MCF 10A (cell line): ENCODE measurements at regions of chr13 and their contacts with region 1.

Region 1: DNA sequence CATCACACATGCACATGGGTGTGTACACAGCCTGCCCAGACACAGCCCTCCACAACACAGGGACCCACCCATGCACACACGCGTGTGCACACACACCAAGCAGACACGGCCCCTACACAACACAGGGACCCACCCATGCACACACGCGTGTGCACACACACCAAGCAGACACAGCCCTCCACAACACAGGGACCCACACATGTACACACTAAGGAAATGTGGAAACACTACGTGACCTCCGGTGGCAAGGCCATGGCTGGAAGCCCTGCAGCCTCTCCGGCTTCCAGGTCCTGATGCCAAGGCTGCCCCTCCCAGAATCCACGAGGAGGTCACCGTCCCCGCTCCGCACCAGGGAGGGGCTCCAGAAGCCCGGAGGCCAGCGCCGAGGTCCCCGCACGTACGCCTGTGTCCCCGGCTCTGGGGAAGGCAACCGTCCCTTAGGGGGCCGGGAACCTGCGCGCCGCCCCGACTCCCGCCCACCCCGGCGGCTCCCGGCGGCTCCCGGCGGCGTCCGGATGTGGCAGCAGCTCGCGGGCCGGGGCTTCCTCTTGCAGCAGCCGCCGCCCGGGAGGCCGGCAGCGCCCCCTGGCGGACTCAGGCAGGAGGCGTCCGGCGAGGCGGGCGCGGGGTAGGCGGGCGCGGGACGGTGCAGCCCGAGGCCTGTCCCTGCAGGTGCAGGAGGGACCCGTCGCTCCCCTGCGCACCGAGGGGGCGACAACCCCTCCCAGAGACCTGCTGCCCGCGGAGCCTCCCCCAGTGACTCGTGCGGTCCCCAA is 29.8 kb upstream of the GRTP1 start:
- DNase-seq: peak; percentile 72
- H3K4me3 Mint-ChIP-seq: peak overlapping the region; percentile 77
- H3K27ac Mint-ChIP-seq: no peak overlapping the region
- H3K4me1 Mint-ChIP-seq: peaks cover 5% of the 10 kb centered on the region
- H3K27me3 Mint-ChIP-seq: peaks cover 16% of the 10 kb centered on the region
- CTCF ChIP-seq: peak; percentile 78

Region 2: GRCh38 chr13:113153810-113154748 is 239.7 kb before region 1 on chr13:
- CTCF ChIA-PET with region 1: no interaction called
- POLR2A ChIA-PET with region 1: no interaction called
- intact Hi-C with region 1: loop called (anchors 10 kb)
- DNase-seq: peak; percentile 61
- H3K4me3 Mint-ChIP-seq: peak overlapping the region; percentile 71
- H3K27ac Mint-ChIP-seq: peak overlapping the region; percentile 73
- H3K4me1 Mint-ChIP-seq: peaks cover 9% of the 10 kb centered on the region
- H3K27me3 Mint-ChIP-seq: no peaks in the 10 kb centered on the region
- CTCF ChIP-seq: no peak

Region 3: GRCh38 chr13:113231306-113232207 is 162.2 kb before region 1 on chr13:
- CTCF ChIA-PET with region 1: no interaction called
- POLR2A ChIA-PET with region 1: no interaction called
- intact Hi-C with region 1: no loop called
- DNase-seq: no peak
- H3K4me3 Mint-ChIP-seq: no peak overlapping the region
- H3K27ac Mint-ChIP-seq: no peak overlapping the region
- H3K4me1 Mint-ChIP-seq: no peaks in the 10 kb centered on the region
- H3K27me3 Mint-ChIP-seq: no peaks in the 10 kb centered on the region
- CTCF ChIP-seq: no peak

Region 4: DNA sequence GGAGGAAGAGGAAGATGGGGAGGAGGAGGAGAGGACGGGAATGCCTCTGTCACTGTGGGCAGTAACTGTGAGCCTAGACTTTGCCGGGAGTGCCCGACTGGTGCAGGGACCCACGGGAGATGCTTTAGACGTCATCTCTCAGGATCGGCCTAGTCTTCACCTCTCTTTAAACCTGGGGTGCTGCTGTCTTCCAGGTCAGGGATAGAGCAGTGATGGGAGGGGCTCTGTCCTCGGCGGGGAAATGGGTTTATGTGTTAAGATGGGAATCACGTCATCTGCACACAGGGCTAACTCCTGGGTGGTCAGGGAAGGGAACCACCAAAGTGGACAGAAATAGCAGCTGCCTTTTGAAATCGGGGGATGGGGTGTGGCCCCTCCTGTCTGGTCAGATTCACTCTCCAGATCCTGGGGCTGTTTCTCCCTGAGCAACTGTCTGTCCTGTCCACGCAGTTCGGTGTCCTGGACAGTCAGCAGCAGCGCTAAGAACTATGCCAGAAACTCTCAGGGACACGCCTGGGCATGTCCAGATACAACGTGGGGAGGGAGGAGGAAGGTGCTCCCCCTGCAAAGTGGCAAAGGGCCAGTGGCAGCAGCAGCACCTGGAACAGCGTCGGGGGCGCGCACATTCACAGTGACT is 443.3 kb after region 1 on chr13:
- CTCF ChIA-PET with region 1: no interaction called
- POLR2A ChIA-PET with region 1: no interaction called
- intact Hi-C with region 1: no loop called
- DNase-seq: peak; percentile 95
- H3K4me3 Mint-ChIP-seq: peak overlapping the region; percentile 75
- H3K27ac Mint-ChIP-seq: peak overlapping the region; percentile 100
- H3K4me1 Mint-ChIP-seq: peaks cover 21% of the 10 kb centered on the region
- H3K27me3 Mint-ChIP-seq: no peaks in the 10 kb centered on the region
- CTCF ChIP-seq: no peak